Activated T-helper 1 cell treated with anti-CD3 and anti-CD28 coated beads, Interleukin-12 subunit alpha, Interleukin-12 subunit beta, Interleukin-2, Interleukin-4 antibody, amounts not matched to agents 30 ng/mL and 10 ng/mL and 1 ng/mL, durations not matched to agents 14 hours and 24 hours and 36 hours (primary cell): ENCODE measurements at regions of chr14 and their contacts with region 1.

Region 1: GRCh38 chr14:95534299-95535225 is at the start of gene GLRX5:
- DNase-seq: peak; percentile 98
- H3K4me3 Mint-ChIP-seq: peak within 1 kb of the TSS; percentile 98
- H3K27ac Mint-ChIP-seq: peak within 1 kb of the TSS; percentile 95
- H3K4me1 Mint-ChIP-seq: peaks cover 73% of the 10 kb centered on the region
- H3K27me3 Mint-ChIP-seq: no peaks in the 10 kb centered on the region
- total RNA-seq, gene GLRX5: 46.7 and 48.9 TPM in 2 replicates

Region 2: DNA sequence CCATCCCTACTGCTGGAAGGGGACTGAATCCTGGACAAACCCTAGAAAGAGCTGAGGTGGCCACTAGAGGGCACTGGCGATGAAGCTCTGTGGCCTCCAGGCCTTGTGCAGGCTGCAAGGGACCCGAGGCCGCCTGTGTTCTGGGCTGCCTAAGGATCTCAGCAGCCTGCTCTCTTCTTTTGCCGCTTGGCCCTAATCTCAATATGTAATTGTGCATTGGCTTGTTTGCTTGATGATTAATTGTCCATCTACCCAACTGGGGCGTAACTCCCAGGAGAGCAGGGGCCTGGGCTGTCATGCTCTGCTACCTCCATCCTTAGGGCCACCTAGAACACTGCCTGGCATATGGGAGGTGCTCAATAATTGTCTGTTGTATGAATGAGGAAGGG is 91.9 kb before region 1 on chr14:
- intact Hi-C with region 1: loop called (anchors 1 kb)
- DNase-seq: peak; percentile 56
- H3K4me3 Mint-ChIP-seq: no peak overlapping the region
- H3K27ac Mint-ChIP-seq: peak overlapping the region; percentile 57
- H3K4me1 Mint-ChIP-seq: peaks cover 5% of the 10 kb centered on the region
- H3K27me3 Mint-ChIP-seq: no peaks in the 10 kb centered on the region

Region 3: GRCh38 chr14:96297000-96297399 is 762.4 kb after region 1 on chr14:
- intact Hi-C with region 1: no loop called
- DNase-seq: no peak
- H3K4me3 Mint-ChIP-seq: no peak overlapping the region
- H3K27ac Mint-ChIP-seq: no peak overlapping the region
- H3K4me1 Mint-ChIP-seq: no peaks in the 10 kb centered on the region
- H3K27me3 Mint-ChIP-seq: no peaks in the 10 kb centered on the region

Region 4: DNA sequence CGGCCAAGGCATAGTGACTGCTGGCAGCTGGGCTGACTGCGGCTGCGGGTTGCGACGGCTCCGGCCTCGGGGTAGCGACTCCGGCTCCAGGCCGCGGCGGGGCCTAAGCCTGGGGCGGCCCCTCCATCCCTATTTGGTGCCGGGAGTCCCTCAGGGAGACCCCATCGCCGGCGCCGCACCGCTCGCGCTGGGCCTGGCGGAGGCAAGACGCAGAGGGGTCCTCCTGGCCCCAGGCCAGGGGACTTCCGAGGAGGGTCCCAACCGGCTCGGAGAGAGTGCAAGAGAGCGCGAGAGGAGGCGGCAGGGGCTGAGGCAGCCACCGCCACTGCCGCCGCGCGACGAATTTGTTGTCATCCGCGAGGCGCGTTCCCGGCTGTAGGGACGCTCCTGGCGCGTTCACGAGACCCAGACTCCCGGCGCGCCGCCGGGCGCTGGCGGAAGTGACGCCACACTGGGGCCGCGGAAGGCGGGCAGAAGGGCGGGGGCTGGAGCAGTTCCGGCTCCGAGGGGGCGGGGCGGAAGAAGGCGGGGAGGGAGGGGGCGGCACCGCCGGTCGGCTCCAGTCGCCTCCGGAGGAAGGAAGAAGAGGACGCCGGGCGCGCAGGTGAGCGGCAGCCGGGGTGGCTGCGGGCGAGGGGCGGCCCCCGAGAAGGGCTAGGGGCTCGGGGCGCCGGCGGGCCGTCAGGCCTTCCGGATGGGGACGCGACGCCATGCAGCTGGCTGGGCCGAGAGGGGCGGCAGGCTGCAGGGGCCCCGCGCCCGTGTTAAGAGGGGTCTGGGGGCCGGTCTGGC is 828.6 kb after region 1 on chr14 and contains the starts of genes ATG2B and GSKIP:
- intact Hi-C with region 1: loop called (anchors 1 kb)
- DNase-seq: peak; percentile 97
- H3K4me3 Mint-ChIP-seq: peak within 1 kb of the TSS; percentile 98
- H3K27ac Mint-ChIP-seq: peak within 1 kb of the TSS; percentile 97
- H3K4me1 Mint-ChIP-seq: peaks cover 55% of the 10 kb centered on the region
- H3K27me3 Mint-ChIP-seq: no peaks in the 10 kb centered on the region
- total RNA-seq, gene ATG2B: 22.2 and 27.7 TPM in 2 replicates
- total RNA-seq, gene GSKIP: 22.7 and 23.7 TPM in 2 replicates